Activated CD4-positive, alpha-beta memory T cell treated with anti-CD3 and anti-CD28 coated beads, Interleukin-2, amount 10 ng/mL, durations not matched to agents 7 days and 5 days (primary cell): ENCODE measurements at regions of chr12 and their contacts with region 1.

Region 1: DNA sequence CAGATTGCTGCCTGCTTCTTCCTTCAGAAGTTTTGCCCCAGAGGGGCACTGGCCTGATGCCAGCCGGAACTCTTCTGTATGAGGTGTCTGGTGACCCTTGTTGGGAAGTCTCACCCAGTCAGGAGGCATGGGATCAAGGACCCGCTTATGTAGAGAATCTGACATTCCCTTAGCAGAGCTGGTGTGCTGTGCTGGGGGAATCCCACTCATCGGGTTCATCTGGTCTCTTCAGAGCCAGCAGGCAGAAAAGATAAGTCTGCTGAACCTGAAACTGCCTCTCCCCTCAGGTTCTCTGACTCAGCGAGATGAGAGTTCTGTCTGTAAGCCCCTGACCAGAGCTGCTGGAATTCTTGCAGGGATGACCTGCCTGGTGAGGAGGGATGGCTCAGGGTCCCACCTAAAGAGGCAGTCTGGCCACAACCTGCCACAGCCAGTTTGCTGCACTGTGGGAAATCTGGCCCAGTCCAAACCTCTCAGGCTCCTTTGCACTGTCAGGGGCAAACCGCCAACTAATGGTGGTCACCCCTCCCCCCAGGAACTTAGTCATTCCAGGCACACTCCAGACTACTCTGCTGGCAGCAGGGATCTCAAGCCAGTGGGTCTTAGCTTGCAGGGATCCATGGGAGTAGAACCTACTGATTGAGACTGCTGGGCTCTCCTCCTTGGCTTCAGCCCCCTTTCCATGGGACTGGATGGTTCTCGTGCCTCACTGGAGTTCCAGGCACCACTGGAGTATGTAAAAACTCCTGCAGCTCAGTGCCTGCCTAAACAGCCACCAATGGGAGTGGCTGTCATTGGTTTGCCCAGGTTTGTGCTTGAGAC is 4.1 kb downstream of the CLEC2D start:
- DNase-seq: peak; percentile 75
- H3K4me3 Mint-ChIP-seq: peak overlapping the region; percentile 92
- H3K27ac Mint-ChIP-seq: peak overlapping the region; percentile 98
- H3K4me1 Mint-ChIP-seq: peaks cover 41% of the 10 kb centered on the region
- H3K27me3 Mint-ChIP-seq: no peaks in the 10 kb centered on the region

Region 2: GRCh38 chr12:9615420-9616136 is 58.0 kb before region 1 on chr12:
- CTCF ChIA-PET with region 1: no interaction called
- POLR2A ChIA-PET with region 1: interaction called, 26 read pairs
- DNase-seq: peak; percentile 23
- H3K4me3 Mint-ChIP-seq: peak overlapping the region; percentile 65
- H3K27ac Mint-ChIP-seq: peak overlapping the region; percentile 94
- H3K4me1 Mint-ChIP-seq: peaks cover 66% of the 10 kb centered on the region
- H3K27me3 Mint-ChIP-seq: no peaks in the 10 kb centered on the region

Region 3: GRCh38 chr12:9687228-9687627 is 13.6 kb after region 1 on chr12:
- CTCF ChIA-PET with region 1: interaction called, 4 read pairs
- POLR2A ChIA-PET with region 1: interaction called, 107 read pairs
- DNase-seq: no peak
- H3K4me3 Mint-ChIP-seq: no peak overlapping the region
- H3K27ac Mint-ChIP-seq: peak overlapping the region; percentile 10
- H3K4me1 Mint-ChIP-seq: peaks cover 77% of the 10 kb centered on the region
- H3K27me3 Mint-ChIP-seq: no peaks in the 10 kb centered on the region

Region 4: DNA sequence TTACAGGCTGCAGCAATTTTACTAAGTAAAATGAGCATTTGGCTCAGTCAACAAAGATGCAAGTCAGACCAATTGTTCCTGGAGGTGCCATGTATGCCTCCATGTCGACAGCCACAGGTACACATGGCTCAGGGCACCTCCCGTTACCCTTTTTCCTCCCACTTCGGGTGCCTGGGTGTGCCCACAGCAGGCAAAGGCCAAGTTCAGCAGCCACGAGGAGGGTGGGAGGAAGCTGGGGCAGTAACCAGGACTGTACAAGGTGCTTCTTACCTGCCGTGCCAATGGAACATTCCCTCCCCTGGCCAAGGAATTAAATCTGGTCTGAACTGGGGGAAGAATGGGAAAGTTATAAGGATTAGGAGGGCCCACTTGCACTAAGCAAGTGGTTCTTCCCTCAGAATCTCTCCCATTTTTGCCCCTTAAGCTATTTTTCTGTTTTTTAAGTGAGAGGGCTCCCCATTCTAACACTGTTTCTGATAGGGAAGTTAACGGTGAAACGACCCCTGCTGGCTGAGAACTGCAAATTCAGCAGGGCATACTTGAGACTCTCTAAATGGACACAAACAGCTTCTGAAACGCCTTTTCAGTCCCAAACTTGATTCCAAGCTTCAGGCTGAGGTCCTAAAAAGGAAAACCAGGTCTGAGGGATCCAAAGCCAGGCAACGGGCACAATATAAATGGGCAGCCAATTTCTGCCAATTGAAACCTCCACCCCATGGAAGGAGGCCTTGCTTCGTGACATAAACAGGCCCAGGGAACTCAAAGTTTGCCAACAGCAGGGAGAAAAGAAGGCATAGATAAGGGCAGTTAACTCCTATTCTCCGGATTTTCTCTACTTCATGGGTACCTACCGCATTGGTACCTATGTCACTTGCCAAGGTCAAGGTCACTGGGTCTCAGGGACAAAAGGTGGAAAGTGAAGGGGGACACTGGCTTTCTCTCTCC is 34.5 kb after region 1 on chr12:
- CTCF ChIA-PET with region 1: interaction called, 4 read pairs
- POLR2A ChIA-PET with region 1: interaction called, 16 read pairs
- DNase-seq: peak; percentile 74
- H3K4me3 Mint-ChIP-seq: peak overlapping the region; percentile 7
- H3K27ac Mint-ChIP-seq: peak overlapping the region; percentile 70
- H3K4me1 Mint-ChIP-seq: peaks cover 40% of the 10 kb centered on the region
- H3K27me3 Mint-ChIP-seq: no peaks in the 10 kb centered on the region

Region 5: DNA sequence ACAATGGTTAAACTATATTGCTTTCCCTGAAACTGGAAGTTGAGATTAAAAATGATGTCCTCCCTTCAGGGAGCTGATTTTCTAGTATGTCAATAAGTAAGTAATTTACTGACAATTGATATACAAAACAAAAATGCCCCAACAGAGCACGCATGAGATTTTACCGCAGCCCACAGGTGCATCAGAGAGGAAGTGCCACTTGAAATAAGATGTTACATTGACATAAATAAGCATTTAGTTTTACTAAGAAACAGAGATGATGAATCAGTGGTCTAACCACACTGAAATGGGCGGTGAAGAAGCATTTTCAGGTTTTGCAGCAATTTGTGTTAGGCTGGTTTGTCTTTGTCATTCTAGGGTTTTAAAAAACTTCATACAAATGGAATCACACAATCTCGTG is 68.1 kb after region 1 on chr12:
- CTCF ChIA-PET with region 1: interaction called, 12 read pairs
- POLR2A ChIA-PET with region 1: interaction called, 121 read pairs
- DNase-seq: peak; percentile 89
- H3K4me3 Mint-ChIP-seq: peak overlapping the region; percentile 79
- H3K27ac Mint-ChIP-seq: peak overlapping the region; percentile 98
- H3K4me1 Mint-ChIP-seq: peaks cover 71% of the 10 kb centered on the region
- H3K27me3 Mint-ChIP-seq: no peaks in the 10 kb centered on the region

Region 6: DNA sequence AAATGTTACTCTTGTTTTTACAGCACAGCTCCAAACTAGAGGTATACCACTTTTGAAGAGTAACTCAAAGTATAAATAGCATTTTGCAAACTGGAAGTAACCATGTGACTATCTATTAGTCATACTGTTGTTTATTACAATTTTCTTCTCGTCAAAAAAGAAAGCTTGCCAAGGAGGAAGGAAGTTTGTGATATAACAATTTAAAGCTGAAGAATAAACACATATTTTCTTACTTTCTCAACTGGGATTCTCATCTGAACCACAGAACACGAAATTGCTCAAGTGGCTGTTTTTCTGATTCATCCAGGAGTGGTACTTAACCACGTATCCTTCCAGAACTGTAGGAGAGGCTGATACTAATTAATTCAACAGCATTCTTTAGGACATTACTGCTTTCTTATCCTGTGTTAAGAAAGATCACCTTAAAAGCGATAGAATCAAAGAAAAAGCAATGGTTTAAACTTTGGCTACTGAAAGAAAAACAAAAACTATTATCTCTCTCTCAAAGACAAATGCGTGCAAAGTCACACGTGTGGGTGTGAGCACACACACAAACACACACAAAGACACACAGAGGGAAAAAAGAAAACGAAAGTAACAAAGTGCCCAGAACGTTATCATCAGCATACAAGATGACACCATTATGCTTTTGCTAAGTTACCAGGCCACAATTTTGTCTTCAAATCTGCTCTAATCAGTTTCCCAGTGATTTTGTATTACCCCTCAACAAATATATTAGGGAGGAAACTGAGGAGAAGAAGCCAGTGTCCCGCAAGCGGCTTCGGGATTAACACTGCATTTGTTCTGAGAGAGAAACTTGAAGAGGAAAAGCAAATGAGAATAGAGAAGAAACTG is 195.9 kb after region 1 on chr12 and contains the start of gene CLEC2B:
- CTCF ChIA-PET with region 1: no interaction called
- POLR2A ChIA-PET with region 1: interaction called, 38 read pairs
- DNase-seq: no peak
- H3K4me3 Mint-ChIP-seq: peak within 1 kb of the TSS; percentile 85
- H3K27ac Mint-ChIP-seq: peak within 1 kb of the TSS; percentile 92
- H3K4me1 Mint-ChIP-seq: peaks cover 19% of the 10 kb centered on the region
- H3K27me3 Mint-ChIP-seq: no peaks in the 10 kb centered on the region
- total RNA-seq, gene CLEC2B: 79.6 to 79.7 TPM